Posterior vena cava (tissue), 2 donors: ENCODE measurements at regions of chr18 and their contacts with region 1.

Region 1: DNA sequence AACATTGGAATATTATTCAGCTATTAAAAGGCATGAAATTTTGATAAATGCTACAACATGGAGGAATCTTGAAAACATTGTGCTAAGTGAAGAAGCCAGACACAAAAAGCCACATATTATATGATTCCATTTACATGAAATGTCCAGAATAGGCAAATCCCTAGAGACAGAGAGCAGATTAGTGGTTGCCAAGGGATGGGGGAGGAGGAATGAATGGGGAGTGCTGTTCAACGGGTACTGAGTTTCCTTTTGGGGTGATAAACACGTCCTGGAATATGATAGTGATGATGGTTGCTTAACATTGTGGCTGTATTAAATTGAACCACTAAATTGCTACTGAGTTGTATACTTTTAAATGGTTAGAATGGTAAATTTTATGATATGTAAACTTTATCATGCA is 8.9 kb upstream of the TWSG1 start:
- DNase-seq: no peak

Region 2: GRCh38 chr18:9304388-9305070 is 21.2 kb before region 1 on chr18:
- intact Hi-C with region 1: loop called in 1 of 2 experiments (anchors 2 kb)
- DNase-seq: no peak

Region 3: DNA sequence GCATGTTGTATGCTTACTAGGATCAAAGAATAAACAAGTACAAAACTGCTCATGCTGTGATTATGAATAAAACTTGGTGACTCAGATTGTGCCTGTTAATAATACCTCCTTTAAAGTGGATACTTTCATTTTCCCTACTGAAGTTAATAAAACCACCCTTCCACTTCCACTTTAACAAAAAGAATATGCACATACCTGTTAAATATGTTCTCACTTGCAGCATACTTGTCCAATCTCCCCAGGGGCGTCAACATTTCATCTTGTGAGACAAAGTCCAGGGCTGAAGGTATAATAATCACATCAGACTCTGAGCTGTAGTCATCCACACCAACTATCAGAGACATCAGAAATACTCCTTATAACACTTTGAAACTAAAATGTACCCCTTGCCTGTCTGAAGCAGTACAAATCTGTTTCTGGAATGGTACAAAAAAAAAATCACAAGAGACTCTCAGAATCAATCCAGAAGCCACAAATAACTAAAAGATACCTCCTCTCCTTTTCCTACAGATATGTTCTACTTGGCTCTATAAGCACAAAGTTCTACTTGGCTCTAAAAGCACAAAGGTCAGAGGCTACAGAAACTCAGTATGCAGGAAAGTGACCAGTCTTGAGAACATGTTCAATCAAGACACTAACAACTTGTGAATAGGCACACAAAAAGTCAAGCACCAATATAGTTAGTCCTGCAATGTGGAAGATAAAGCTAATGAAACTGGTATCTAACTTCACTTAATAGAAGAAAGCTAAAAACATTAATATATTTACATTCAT is 269.3 kb after region 1 on chr18:
- intact Hi-C with region 1: no loop called
- DNase-seq: no peak